ENCODE measurements at regions of chr17 and their contacts with region 1.

Region 1: DNA sequence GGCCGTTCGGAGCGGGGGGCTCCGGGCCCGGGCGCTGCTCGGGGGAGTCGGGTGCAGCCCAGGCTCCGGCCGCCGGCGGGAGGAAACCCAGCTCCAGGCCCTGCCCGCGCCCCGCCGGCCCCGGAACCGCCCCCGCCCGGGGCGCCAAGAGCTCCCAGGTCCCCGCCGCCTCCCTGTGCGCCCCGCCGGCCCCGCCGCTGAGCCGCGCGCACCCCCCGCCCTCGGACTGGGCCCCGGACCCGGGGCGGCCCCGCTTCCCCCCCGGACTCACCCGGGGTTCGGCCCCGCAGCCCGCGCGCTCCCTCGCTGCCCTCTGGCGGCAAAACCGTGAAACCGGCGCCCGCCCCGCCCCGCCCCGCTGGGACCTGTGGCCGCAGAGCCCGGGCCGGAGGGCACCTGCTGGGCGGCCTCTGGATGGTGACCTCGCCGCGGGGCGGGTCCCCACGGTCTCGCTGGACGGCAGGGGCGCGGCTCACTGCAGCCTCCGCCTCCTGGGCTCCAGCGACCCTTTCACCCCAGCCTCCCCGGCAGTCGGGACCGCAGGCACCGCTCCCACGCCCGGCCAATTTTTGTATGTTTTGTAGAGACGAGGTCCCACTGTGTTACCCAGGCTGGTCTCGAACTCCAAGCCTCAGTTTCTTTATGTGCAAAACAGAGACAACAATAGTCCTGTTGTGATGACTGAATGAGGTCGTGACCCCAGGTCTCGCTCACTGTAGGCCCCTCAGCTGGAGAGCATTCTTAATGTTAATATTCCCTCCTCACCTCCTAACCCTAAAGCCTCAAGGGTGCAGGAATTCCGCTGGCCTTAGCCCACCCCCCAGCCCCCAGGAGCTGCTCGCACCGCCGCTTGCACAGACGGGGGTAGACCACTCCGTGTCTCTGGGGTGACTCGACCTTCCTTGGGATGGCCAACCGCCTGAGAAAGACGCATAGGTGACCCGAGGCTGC is 33.6 kb upstream of the RPH3AL start:
- DNase-seq: peak; percentile 84
- ATAC-seq: peak; percentile 82 to 88

Region 2: GRCh38 chr17:164303-165235 is 221.6 kb before region 1 on chr17:
- intact Hi-C with region 1: loop called (anchors 5 kb)
- DNase-seq: peak; percentile 65
- ATAC-seq: peak; percentile 87 to 90

Region 3: GRCh38 chr17:266701-267667 is 119.2 kb before region 1 on chr17:
- intact Hi-C with region 1: loop called in 1 of 2 experiments (anchors 10 kb)
- DNase-seq: peak; percentile 82
- ATAC-seq: peak; percentile 88 to 92

Region 4: DNA sequence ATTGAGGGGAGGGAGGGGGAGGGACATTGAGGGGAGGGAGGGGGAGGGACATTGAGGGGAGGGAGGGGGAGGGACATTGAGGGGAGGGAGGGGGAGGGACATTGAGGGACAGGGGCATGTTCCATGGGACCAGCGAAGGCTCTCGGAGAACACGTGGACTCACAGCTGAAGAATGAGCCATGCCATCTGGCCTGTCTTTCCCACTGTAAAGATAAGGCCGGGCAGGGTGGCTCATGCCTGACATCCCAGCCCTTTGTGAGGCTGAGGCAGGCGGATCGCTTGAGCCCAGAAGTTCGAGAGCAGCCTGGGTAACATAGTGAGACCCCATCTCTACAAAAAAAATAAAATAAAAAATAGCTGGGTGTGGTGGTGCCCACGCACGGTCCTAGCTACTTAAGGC is 66.1 kb before region 1 on chr17:
- intact Hi-C with region 1: no loop called
- DNase-seq: peak; percentile 19
- ATAC-seq: peak in 1 of 2 donors; percentile 32

Region 5: DNA sequence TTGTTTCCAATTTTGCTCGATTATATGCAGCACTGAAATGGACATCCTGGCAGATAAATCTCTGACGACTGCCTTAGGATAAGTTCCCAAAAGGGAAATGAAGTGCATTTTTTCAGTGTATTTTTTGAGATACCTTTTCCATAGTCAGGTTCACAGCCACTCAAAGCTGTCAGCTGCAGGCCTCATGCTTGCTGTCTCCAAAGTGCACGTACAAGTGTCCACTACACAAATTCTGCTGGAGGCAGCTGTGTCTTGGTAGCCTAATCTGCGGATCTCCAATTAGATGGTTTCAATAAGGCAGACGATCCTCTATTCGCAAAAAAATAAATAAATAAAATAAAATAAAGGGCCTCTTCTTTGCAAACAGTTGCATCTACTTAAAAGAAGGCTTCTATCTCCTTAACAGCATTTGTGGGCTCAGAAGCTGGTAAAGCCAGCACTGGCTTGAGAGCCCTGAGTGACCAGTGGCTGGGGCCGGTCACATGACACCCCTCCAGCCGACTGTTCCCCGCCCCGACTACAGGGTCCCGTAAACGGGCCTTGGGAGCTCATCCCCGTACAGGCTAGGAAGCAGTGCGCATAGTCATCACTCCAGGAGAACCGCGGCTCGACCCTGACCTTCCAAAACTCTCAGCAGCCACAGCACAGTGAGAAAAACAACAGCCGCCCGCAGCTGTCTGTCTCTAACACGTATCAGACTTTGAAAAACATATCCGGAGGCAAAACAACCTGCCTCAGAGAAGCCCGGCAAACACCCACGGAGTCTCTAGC is 52.4 kb before region 1 on chr17:
- intact Hi-C with region 1: no loop called
- DNase-seq: peak; percentile 87
- ATAC-seq: peak; percentile 86 to 89

Region 6: GRCh38 chr17:436571-436970 is 50.4 kb after region 1 on chr17:
- intact Hi-C with region 1: no loop called
- DNase-seq: no peak
- ATAC-seq: no peak

Region 7: GRCh38 chr17:700504-701094 is 314.4 kb after region 1 on chr17:
- intact Hi-C with region 1: no loop called
- DNase-seq: no peak
- ATAC-seq: peak; percentile 50 to 53